WTC11 (cell line): ENCODE measurements at regions of chr3 and their contacts with region 1.

Region 1: GRCh38 chr3:18469775-18470174 is 44.6 kb upstream of the SATB1 start:
- DNase-seq: no peak
- ATAC-seq: no peak
- H3K4me3 Mint-ChIP-seq: no peak overlapping the region
- H3K27ac Mint-ChIP-seq: no peak overlapping the region
- H3K4me1 Mint-ChIP-seq: peaks cover 9% of the 10 kb centered on the region
- H3K27me3 Mint-ChIP-seq: no peaks in the 10 kb centered on the region
- CTCF ChIP-seq: no peak

Region 2: DNA sequence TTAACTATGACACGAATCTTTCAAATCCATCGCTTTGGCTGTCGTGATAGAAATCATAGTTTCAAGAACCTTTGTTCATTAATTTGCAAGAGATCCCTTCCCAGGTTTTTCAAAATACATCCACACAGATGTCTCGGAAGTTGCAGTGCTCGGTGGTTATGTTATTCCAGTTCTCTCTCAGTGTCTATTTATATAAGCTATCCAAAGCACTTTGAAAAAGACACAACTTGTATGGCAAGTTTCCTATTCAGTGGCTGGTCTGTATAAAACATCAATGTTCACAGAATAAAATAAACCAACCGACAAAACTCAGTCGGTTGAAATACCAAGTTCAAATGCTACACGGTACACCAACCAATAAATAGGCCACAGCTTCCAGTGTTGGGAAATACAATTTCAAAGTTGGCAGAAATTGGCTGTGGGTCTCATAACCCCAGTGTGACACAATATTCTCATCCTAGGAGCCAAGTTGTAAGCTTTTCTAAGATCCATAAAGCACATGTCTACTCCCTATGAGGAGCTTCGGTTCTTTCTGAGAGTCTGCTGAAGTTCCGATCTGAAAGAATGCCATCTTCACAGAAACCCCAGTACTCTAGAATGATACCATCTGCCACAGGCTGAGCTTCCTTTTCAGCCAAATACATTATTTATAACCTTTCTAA is 68.3 kb before region 1 on chr3:
- CTCF ChIA-PET with region 1: no interaction called
- POLR2A ChIA-PET with region 1: no interaction called
- DNase-seq: no peak
- ATAC-seq: no peak
- H3K4me3 Mint-ChIP-seq: no peak overlapping the region
- H3K27ac Mint-ChIP-seq: peak overlapping the region; percentile 47; the same call in 1 of the 2 replicates
- H3K4me1 Mint-ChIP-seq: peaks cover 5% of the 10 kb centered on the region; the same call in 1 of the 2 replicates
- H3K27me3 Mint-ChIP-seq: no peaks in the 10 kb centered on the region
- CTCF ChIP-seq: no peak

Region 3: DNA sequence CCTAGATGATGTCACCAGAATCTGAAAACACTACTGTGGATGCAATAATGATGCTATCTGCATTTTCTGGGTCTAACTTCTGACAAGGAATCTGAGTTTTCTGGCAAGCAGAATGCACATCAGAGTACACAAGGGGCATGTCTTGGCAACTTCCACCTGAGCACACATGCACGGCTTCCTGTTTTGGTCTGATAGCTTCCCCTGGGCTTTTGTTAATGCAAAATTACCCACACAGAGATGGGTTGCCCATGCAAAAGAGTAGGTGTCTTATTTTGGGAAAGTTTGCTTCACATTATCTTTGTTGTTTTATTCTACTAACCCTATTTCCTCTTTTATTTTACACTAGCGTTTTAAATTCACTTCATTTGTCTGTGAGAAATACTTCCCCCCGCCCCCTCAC is 29.5 kb after region 1 on chr3:
- CTCF ChIA-PET with region 1: no interaction called
- POLR2A ChIA-PET with region 1: no interaction called
- DNase-seq: no peak
- ATAC-seq: no peak
- H3K4me3 Mint-ChIP-seq: no peak overlapping the region
- H3K27ac Mint-ChIP-seq: no peak overlapping the region
- H3K4me1 Mint-ChIP-seq: peaks cover 36% of the 10 kb centered on the region
- H3K27me3 Mint-ChIP-seq: no peaks in the 10 kb centered on the region
- CTCF ChIP-seq: no peak

Region 4: DNA sequence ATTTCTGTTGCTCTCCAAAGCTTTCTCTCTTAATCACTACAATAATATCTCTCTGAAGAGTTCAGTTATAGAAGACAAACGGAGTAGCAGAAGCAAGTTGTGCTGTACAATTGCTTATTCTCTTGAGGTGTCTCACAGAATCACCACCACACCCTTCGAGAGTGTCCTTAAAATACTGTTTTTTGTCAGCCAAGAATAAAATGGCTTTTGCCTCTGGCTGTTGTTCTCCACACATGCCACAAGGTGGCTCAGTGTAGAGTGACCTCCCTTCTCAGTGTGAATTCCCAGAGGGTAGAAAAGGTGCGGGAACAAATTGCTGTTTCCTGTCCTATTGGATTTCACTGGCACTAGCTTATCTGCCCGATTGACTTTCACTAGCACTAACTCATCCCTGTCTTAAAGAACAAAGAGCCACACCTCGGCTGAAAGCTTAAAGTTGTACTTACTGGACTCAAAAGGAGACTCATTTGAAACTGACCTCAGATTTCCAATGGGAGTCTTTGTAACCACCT is 89.6 kb after region 1 on chr3:
- CTCF ChIA-PET with region 1: no interaction called
- POLR2A ChIA-PET with region 1: no interaction called
- DNase-seq: peak; percentile 34
- ATAC-seq: peak; percentile 97
- H3K4me3 Mint-ChIP-seq: no peak overlapping the region
- H3K27ac Mint-ChIP-seq: no peak overlapping the region
- H3K4me1 Mint-ChIP-seq: peaks cover 23% of the 10 kb centered on the region
- H3K27me3 Mint-ChIP-seq: no peaks in the 10 kb centered on the region
- CTCF ChIP-seq: peak; percentile 80

Region 5: GRCh38 chr3:18618723-18619122 is 148.9 kb after region 1 on chr3:
- CTCF ChIA-PET with region 1: no interaction called
- POLR2A ChIA-PET with region 1: no interaction called
- DNase-seq: no peak
- ATAC-seq: peak; percentile 95
- H3K4me3 Mint-ChIP-seq: no peak overlapping the region
- H3K27ac Mint-ChIP-seq: peak overlapping the region; percentile 80
- H3K4me1 Mint-ChIP-seq: peaks cover 13% of the 10 kb centered on the region
- H3K27me3 Mint-ChIP-seq: no peaks in the 10 kb centered on the region
- CTCF ChIP-seq: no peak

Region 6: DNA sequence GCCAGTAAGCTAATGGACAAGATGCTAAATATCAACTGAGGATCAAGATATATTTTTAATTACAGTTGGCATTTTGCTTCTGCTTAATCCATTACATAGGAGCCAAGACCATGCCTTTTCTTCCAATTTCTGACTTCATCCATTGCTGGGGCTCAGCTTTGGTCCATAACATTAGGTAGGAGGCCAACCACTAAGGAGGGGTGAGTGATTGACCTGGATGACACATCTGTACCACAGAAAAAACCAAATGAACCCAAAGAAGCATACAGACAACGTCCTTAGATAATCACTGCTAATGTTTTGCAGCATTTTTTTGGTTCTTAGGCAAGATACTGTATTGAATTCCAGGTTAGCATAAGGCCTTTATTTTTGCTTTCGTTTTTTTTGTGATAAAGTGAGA is 325.3 kb after region 1 on chr3:
- CTCF ChIA-PET with region 1: no interaction called
- POLR2A ChIA-PET with region 1: interaction called, 16 read pairs
- DNase-seq: no peak
- ATAC-seq: no peak
- H3K4me3 Mint-ChIP-seq: no peak overlapping the region
- H3K27ac Mint-ChIP-seq: no peak overlapping the region
- H3K4me1 Mint-ChIP-seq: no peaks in the 10 kb centered on the region
- H3K27me3 Mint-ChIP-seq: no peaks in the 10 kb centered on the region
- CTCF ChIP-seq: no peak